Transverse colon (tissue), 4 donors: ENCODE measurements at regions of chr4 and their contacts with region 1.

Region 1: DNA sequence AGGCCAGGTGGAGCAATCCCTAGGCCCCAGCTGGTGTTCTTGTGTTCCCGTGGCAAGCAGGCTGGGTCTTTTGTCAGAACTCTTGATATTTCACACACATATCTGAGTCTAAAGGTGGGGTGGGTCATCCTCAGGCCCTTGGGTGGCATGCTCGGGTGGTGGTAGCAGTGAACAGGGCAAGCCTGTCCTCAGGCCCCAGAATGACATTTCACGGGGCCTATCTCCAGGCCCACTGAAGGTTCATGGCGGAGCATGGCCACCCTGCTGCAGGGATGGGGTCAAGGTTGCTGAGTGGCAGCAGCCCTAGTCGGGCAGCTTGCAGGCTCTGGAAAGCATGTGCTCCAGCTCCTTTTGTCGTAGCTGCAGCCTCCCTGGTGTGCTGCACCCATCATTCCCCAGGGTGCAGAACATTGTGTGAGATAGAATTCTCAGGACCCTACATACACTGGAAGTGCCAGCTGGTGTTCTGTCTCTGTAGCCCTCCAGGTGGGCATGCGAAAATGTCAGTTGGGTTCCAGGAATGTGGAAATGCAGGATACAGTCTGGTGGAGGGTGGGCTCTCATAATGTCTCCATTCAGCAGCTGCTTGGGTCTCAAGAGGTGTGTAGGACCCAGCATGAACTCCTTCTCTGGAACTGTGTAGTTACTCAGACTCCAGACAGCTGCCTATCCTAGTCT is 1571.8 kb downstream of the STIM2 start:
- DNase-seq: no peak
- H3K4me3 ChIP-seq: no peak overlapping the region
- H3K27ac ChIP-seq: no peak overlapping the region
- H3K4me1 ChIP-seq: peaks cover 0 to 4% (median 0%) of the 10 kb centered on the region in 4 donors
- H3K27me3 ChIP-seq: no peaks in the 10 kb centered on the region
- CTCF ChIP-seq: no peak
- EP300 ChIP-seq: no peak
- POLR2A ChIP-seq: no peak

Region 2: GRCh38 chr4:27986476-27986875 is 446.0 kb before region 1 on chr4:
- in situ Hi-C with region 1: no loop called
- intact Hi-C with region 1: loop called (anchors 5 kb)
- DNase-seq: no peak
- H3K4me3 ChIP-seq: no peak overlapping the region
- H3K27ac ChIP-seq: no peak overlapping the region
- H3K4me1 ChIP-seq: no peaks in the 10 kb centered on the region
- H3K27me3 ChIP-seq: no peaks in the 10 kb centered on the region
- CTCF ChIP-seq: no peak
- EP300 ChIP-seq: no peak
- POLR2A ChIP-seq: no peak